Sigmoid colon (tissue), 7 donors: ENCODE measurements at regions of chr9 and their contacts with region 1.

Region 1: DNA sequence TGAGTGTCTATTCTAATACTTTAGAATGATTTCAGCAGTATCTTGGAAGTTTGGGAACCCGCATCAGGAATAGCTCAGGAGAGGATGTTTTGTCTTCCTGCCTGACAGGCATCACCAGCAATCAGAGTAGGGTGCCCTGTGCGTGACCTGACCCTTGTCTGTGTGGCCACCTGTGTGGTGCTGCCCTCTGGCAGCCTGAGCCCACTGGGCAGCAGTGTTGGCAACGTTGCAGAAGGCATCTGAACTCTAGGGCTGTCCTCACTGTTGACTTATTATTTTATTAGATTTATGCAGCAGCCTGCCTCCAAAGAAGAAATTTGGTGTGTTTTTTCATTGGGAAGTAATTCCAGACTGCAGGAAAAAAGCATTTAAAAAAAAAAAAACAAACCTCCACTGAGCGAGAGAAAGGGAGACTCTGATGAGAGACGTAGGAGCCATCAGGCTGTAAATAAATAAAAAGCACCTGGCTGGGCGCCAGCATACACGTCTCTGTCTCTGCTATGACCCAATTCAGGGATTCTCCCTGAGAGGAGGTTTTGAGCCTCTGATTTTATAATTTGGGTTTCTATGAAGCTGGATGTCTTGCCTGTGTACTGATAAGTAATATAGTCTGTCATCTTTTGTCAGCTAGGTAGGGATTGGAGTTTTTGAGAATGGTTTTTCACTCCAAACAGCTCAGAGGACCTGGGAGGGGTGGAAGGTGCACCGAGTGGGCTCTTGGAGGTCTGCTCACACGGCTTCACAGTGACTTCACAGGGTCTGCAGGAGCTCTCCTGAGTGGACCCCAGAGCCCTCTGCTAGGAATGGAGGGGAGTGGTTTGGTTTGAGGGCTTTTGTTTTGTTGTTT is 49.0 kb downstream of the FAM78A start:
- DNase-seq: no peak
- H3K4me3 ChIP-seq: peak overlapping the region in 1 of 4 donors; percentile 33
- H3K27ac ChIP-seq: no peak overlapping the region
- H3K4me1 ChIP-seq: peaks cover 0 to 10% (median 2%) of the 10 kb centered on the region in 4 donors
- H3K27me3 ChIP-seq: no peaks in the 10 kb centered on the region
- CTCF ChIP-seq: no peak
- EP300 ChIP-seq: no peak
- POLR2A ChIP-seq: no peak

Region 2: GRCh38 chr9:131289301-131290038 is 62.1 kb after region 1 on chr9 and contains the start of gene PLPP7:
- intact Hi-C with region 1: loop called (anchors 5 kb)
- DNase-seq: peak; percentile 89
- H3K4me3 ChIP-seq: peak within 1 kb of the TSS; percentile 49 to 60 (median 54)
- H3K27ac ChIP-seq: peak within 1 kb of the TSS; percentile 69 to 77 (median 74)
- H3K4me1 ChIP-seq: peaks cover 0 to 24% (median 18%) of the 10 kb centered on the region in 4 donors
- H3K27me3 ChIP-seq: no peaks in the 10 kb centered on the region
- CTCF ChIP-seq: no peak
- EP300 ChIP-seq: no peak
- POLR2A ChIP-seq: no peak
- total RNA-seq, gene PLPP7: 14.3 to 31.9 (median 16.8) TPM